ENCODE measurements at regions of chr20 and their contacts with region 1.

Region 1: GRCh38 chr20:43187476-43188233 is 2.1 kb downstream of the PTPRT start:
- DNase-seq: peak; percentile 48 to 94 (median 80)
- ATAC-seq: peak; percentile 64 to 92 (median 85)
- H3K4me3 ChIP-seq: peak overlapping the region in 1 of 4 donors; percentile 13
- H3K27ac ChIP-seq: no peak overlapping the region
- H3K4me1 ChIP-seq: peaks cover 0 to 3% (median 0%) of the 10 kb centered on the region in 3 donors
- H3K27me3 ChIP-seq: peaks cover 0 to 24% (median 4%) of the 10 kb centered on the region in 4 donors
- CTCF ChIP-seq: peak; percentile 88 to 98 (median 94)

Region 2: DNA sequence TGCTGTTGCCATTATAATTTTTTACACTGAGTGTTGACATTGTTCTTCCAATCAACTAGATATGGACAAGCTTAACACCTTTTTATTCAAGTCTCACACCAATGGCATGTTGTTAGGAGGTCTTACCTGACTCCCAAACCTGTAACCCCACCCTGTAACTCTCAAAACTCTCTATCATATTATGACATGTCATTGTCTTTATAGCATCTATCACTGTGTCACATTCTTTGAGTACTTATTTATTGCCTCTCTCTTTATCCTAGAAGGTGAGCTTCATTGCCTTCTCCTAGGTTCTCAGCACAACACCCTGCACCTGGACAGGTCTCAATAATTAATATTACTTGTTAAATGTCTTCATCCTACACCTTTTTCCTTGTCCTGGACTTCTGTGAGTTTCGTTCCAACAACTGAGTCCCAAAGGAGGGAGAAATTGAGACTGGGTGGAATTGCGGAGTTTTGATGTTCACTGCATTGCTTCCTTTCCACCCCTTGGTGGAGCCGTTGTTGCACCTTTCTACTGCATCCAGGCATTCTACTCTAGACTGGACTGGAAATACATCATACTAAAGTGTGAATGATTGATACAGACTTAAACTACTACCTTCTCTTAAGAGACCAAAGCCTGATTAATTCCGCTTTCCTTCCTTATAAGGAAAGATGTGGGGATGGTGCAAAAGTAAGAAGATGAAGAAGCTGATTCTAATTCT is 1231.5 kb before region 1 on chr20:
- intact Hi-C with region 1: loop called in 1 of 3 experiments (anchors 10 kb)
- DNase-seq: no peak
- ATAC-seq: peak in 3 of 4 donors; percentile 44 to 65 (median 46)
- H3K4me3 ChIP-seq: no peak overlapping the region
- H3K27ac ChIP-seq: no peak overlapping the region
- H3K4me1 ChIP-seq: no peaks in the 10 kb centered on the region
- H3K27me3 ChIP-seq: no peaks in the 10 kb centered on the region
- CTCF ChIP-seq: peak in 2 of 4 donors; percentile 16 to 29

Region 3: DNA sequence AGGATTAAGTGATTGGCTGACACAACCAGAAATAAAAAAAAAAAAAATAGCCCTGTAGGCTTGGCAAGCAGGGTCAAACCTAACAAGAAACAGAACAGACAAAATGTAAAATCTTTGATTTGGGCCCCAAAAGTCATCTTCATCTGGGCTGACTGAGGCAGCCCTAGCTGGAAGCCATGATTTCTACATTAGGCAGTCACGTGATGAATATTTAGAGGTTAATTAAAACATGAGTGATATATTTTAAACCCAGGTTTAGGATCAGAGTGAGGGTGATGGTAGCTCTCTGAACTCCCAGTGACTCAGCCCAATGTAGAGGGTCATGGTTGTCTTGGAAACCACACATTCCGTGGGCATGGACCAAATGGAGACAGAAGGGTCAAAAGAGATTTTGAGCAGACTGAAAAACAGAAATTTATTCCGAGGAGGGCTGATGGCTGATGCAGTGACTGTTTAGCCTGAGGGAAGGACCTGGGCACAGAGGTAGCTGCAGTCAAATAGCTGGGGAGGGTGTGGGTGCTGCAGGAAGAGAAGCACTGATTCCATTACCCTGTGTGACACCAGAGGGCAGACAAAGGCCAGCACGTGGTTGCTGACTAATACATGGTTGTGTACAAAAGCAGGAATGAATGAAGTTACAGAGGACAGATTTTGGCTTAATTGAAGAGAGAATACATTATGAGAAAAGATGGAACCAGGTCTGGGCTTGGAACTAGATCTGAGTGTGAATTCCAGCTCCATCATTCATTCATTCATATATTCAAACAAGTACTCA is 996.3 kb before region 1 on chr20:
- intact Hi-C with region 1: loop called in 1 of 3 experiments (anchors 10 kb)
- DNase-seq: no peak
- ATAC-seq: no peak
- H3K4me3 ChIP-seq: no peak overlapping the region
- H3K27ac ChIP-seq: no peak overlapping the region
- H3K4me1 ChIP-seq: no peaks in the 10 kb centered on the region
- H3K27me3 ChIP-seq: no peaks in the 10 kb centered on the region
- CTCF ChIP-seq: no peak

Region 4: DNA sequence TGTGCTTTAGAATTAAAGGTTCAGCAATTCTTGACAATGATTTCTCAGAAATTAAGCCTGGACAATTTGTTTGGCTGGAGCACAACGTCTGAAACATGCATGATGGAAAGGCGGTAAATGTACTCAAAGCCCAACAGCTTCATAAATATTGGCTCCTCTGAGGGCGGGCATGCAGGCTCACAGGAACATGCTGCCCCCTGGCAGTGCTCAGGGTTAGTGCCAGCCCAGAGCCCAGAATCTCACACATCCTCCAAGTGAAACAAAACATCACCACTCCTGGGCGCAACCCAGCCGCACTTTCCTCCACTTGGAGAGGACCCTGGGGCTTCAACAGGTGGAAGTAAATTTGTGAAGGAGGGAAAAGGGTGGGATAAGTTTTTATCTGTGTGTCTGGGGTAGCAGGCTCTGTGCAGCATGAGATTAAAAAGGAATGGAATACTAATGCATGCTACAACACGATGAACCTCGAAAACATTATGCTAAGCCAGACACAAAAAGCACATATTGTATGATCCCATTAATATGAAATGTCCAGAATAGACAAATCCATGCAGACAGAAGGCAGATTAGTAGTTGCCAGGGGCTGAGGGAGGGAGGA is 56.1 kb after region 1 on chr20:
- intact Hi-C with region 1: no loop called
- DNase-seq: peak in 2 of 6 donors; percentile 10 to 20
- ATAC-seq: peak in 3 of 4 donors; percentile 50 to 71 (median 66)
- H3K4me3 ChIP-seq: no peak overlapping the region
- H3K27ac ChIP-seq: no peak overlapping the region
- H3K4me1 ChIP-seq: no peaks in the 10 kb centered on the region
- H3K27me3 ChIP-seq: no peaks in the 10 kb centered on the region
- CTCF ChIP-seq: peak in 1 of 4 donors; percentile 8

Measured in pancreas (tissue), 10 donors.